ENCODE measurements at regions of chr11 and their contacts with region 1.

Region 1: DNA sequence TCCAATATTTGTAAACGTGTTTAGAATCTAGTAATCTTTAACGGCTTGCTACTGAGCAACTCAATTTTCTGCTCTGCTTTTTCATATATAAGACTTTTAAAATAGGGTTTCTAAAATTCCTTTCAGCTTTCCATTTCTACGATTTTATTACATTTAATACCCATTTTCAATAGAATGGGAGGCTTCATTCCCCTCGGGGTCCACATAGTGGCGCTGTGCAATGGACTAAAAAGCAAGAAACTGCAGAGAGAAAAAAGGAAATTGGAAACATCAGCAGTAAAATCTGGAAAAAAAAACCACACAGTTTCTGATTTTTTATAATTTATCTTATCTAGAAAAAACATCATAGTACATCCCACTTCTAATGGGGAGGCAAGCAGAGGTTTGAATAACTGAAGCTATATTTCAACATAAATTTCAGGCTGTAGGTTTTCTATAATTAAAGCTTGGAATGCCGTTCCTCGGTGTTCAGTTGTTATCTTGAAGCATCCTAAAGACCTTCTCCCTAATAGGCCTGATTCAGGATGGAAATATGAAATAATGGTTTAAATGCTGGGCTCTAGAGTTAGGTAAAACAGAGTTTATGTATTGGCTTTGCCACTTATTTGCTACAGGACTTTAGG is 18.7 kb upstream of the JHY start:
- DNase-seq: peak; percentile 80
- ATAC-seq: no peak
- H3K4me3 ChIP-seq: peak overlapping the region; percentile 48; the same call in 1 of the 2 replicates
- H3K27ac ChIP-seq: no peak overlapping the region
- H3K4me1 ChIP-seq: peaks cover 22% of the 10 kb centered on the region
- H3K27me3 ChIP-seq: no peaks in the 10 kb centered on the region
- CTCF ChIP-seq: peak; percentile 98

Region 2: GRCh38 chr11:122439911-122440810 is 423.7 kb before region 1 on chr11:
- CTCF ChIA-PET with region 1: no interaction called
- POLR2A ChIA-PET with region 1: no interaction called
- intact Hi-C with region 1: no loop called
- DNase-seq: no peak
- ATAC-seq: no peak
- H3K4me3 ChIP-seq: 0 out of 2 replicates have a peak overlapping the region, but pooled peaks have one; percentile 2
- H3K27ac ChIP-seq: no peak overlapping the region
- H3K4me1 ChIP-seq: no peaks in the 10 kb centered on the region
- H3K27me3 ChIP-seq: peaks cover 86% of the 10 kb centered on the region
- CTCF ChIP-seq: no peak

Region 3: GRCh38 chr11:122882857-122883645 is 19.2 kb after region 1 on chr11:
- CTCF ChIA-PET with region 1: interaction called, 3 read pairs
- POLR2A ChIA-PET with region 1: interaction called, 13 read pairs
- intact Hi-C with region 1: loop called (anchors 2 kb)
- DNase-seq: peak; percentile 83
- ATAC-seq: peak; percentile 81
- H3K4me3 ChIP-seq: peak overlapping the region; percentile 73
- H3K27ac ChIP-seq: peak overlapping the region; percentile 65
- H3K4me1 ChIP-seq: peaks cover 16% of the 10 kb centered on the region
- H3K27me3 ChIP-seq: no peaks in the 10 kb centered on the region
- CTCF ChIP-seq: no peak

Region 4: GRCh38 chr11:122888162-122888561 is 24.3 kb after region 1 on chr11:
- CTCF ChIA-PET with region 1: interaction called, 3 read pairs
- POLR2A ChIA-PET with region 1: interaction called, 13 read pairs
- intact Hi-C with region 1: loop called (anchors 2 kb)
- DNase-seq: no peak
- ATAC-seq: no peak
- H3K4me3 ChIP-seq: no peak overlapping the region
- H3K27ac ChIP-seq: no peak overlapping the region
- H3K4me1 ChIP-seq: peaks cover 9% of the 10 kb centered on the region
- H3K27me3 ChIP-seq: no peaks in the 10 kb centered on the region
- CTCF ChIP-seq: no peak

Region 5: GRCh38 chr11:122910775-122911174 is 47.0 kb after region 1 on chr11:
- CTCF ChIA-PET with region 1: interaction called, 9 read pairs
- POLR2A ChIA-PET with region 1: no interaction called
- intact Hi-C with region 1: loop called (anchors 1 kb)
- DNase-seq: peak; percentile 53
- ATAC-seq: peak; percentile 50
- H3K4me3 ChIP-seq: no peak overlapping the region
- H3K27ac ChIP-seq: no peak overlapping the region
- H3K4me1 ChIP-seq: no peaks in the 10 kb centered on the region
- H3K27me3 ChIP-seq: no peaks in the 10 kb centered on the region
- CTCF ChIP-seq: peak; percentile 72

Region 6: GRCh38 chr11:123020968-123021367 is 157.2 kb after region 1 on chr11:
- CTCF ChIA-PET with region 1: interaction called, 31 read pairs
- POLR2A ChIA-PET with region 1: no interaction called
- intact Hi-C with region 1: loop called (anchors 1 kb)
- DNase-seq: peak; percentile 80
- ATAC-seq: peak; percentile 71
- H3K4me3 ChIP-seq: no peak overlapping the region
- H3K27ac ChIP-seq: no peak overlapping the region
- H3K4me1 ChIP-seq: peaks cover 5% of the 10 kb centered on the region; the same call in 1 of the 2 replicates
- H3K27me3 ChIP-seq: no peaks in the 10 kb centered on the region; the same call in 1 of the 2 replicates
- CTCF ChIP-seq: peak; percentile 87

Region 7: DNA sequence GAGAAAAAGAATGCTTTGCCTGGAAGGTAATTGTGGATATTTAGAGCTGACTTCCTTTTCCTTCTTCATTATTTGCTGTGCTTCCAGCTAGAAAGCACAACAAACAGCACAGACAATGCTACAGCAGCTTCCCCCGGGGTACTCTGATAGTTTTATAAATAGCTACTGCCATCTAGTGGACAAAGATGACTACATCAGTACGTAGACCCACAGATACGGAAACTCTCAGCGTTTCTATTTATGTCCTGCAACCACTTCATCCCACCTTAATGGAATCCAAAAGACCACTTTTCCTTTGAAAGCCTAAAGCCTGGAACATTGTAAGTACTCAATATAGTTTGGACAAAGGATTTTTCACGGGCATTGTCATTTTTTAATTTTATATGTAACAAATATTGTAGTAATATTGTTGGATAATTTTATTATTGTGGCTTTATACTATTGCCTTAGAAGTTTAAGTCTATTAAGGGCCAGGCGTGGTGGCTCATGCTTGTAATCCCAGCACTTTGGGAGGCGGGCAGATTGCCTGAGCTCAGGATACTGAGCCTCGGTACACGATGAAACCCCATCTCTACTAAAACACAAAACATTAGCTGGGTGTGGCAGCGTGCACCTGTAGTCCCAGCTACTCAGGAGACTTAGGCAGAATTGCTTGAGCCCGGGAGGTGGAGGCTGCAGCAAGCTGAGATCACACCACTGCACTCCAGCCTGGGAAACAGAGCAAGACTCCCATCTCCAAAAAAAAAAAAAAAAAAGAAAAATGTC is 190.7 kb after region 1 on chr11:
- CTCF ChIA-PET with region 1: interaction called, 15 read pairs
- POLR2A ChIA-PET with region 1: no interaction called
- intact Hi-C with region 1: loop called (anchors 10 kb)
- DNase-seq: peak; percentile 89
- ATAC-seq: peak; percentile 82
- H3K4me3 ChIP-seq: no peak overlapping the region
- H3K27ac ChIP-seq: no peak overlapping the region
- H3K4me1 ChIP-seq: peaks cover 24% of the 10 kb centered on the region
- H3K27me3 ChIP-seq: no peaks in the 10 kb centered on the region
- CTCF ChIP-seq: peak; percentile 87

Region 8: GRCh38 chr11:123110356-123110755 is 246.5 kb after region 1 on chr11:
- CTCF ChIA-PET with region 1: no interaction called
- POLR2A ChIA-PET with region 1: no interaction called
- intact Hi-C with region 1: no loop called
- DNase-seq: no peak
- ATAC-seq: no peak
- H3K4me3 ChIP-seq: no peak overlapping the region
- H3K27ac ChIP-seq: no peak overlapping the region
- H3K4me1 ChIP-seq: peaks cover 7% of the 10 kb centered on the region
- H3K27me3 ChIP-seq: no peaks in the 10 kb centered on the region
- CTCF ChIP-seq: no peak

Measured in PC-3 (cell line).